Right ventricle myocardium inferior (tissue), 1 donor: ENCODE measurements at regions of chr6 and their contacts with region 1.

Region 1: GRCh38 chr6:16257999-16258708 is 19.8 kb downstream of the GMPR start:
- DNase-seq: no peak
- ATAC-seq: peak; percentile 95

Region 2: GRCh38 chr6:16244869-16245451 is 13.2 kb before region 1 on chr6:
- intact Hi-C with region 1: loop called (anchors 2 kb)
- DNase-seq: no peak
- ATAC-seq: peak; percentile 65

Region 3: DNA sequence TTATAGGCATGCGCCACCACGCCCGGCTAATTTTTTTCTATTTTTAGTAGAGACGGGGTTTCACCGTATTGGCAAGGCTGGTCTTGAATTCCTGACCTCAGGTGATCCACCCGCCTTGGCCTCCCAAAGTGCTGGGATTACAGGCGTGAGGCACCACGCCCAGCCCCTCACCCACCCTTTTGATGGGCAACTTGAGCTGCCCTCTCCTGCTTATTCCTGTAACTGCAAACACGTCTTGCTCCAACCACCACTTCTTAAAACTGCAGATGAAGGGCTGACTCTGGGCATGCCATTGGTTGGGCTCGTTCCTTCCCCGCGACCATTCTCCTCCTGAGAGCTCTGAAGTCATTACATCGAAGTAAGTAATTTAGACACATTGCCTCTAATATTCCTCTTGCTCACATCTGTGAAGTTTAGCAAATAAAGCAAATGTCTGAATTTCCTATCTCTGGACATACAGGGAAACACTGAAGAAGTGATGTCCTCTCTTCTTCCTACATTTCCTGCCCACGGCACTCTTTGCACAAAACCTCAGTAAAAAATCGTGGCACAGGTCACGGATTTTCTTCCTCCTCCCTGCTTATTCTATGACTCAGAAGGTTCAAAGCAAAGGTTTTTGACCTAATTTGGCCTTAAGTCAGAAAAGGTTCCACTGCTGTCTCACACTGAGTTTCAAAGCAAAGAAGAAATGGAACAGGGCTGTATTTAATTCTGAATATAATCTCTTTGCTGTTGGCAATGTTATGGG is 97.7 kb after region 1 on chr6:
- intact Hi-C with region 1: no loop called
- DNase-seq: no peak
- ATAC-seq: no peak